ENCODE measurements at regions of chr14 and their contacts with region 1.

Region 1: DNA sequence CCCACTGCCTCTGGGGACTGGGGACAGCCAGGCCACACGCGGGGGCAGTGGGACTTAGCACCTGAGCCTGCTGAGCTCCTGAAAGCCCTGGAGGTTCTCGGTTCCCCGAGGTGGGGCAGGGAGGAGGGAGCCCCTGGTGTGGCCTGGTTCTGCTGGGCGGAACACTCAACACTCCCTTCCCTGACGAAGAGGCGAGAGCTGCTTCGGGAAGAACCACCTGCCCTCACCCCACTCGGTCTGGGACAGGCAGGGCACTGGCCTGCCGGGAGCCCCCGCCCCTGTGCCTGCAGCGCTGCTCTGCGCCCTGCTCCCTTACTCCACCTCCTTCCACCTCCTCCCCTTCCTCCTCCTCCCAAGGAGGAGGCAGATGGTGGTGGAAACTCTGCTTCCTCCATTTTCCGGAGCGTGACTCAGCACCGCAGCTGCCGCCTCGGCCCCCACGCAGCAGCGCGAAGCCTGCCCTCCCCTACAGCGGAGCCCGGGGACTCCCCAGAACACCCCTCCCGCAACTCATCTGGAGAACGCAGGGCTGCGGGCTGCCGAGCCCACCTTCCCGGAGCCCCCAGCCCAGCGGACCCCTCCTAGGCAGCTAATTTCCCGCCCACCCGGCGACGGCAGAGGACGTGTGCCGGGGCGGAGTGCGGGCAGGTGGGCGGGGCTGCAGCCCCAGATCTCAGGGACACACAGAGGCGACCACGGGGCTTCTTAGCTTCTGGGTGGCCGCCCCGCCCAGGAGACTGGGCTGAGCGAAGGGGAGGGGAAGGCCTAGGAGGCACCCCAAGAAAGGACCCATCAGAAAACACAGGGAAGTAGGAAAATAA is 11.7 kb upstream of the INF2 start:
- DNase-seq: peak; percentile 66 to 83
- H3K4me3 ChIP-seq: peak overlapping the region; percentile 68
- H3K27ac ChIP-seq: peak overlapping the region; percentile 91
- H3K4me1 ChIP-seq: peaks cover 48% of the 10 kb centered on the region
- H3K27me3 ChIP-seq: no peaks in the 10 kb centered on the region
- CTCF ChIP-seq: no peak

Region 2: GRCh38 chr14:104694991-104695659 is 17.4 kb after region 1 on chr14:
- CTCF ChIA-PET with region 1: interaction called, 4 read pairs
- POLR2A ChIA-PET with region 1: interaction called, 12 read pairs
- intact Hi-C with region 1: no loop called
- DNase-seq: peak in 1 of 2 experiments; percentile 82
- H3K4me3 ChIP-seq: no peak overlapping the region
- H3K27ac ChIP-seq: no peak overlapping the region
- H3K4me1 ChIP-seq: peaks cover 9% of the 10 kb centered on the region
- H3K27me3 ChIP-seq: no peaks in the 10 kb centered on the region
- CTCF ChIP-seq: no peak

Region 3: DNA sequence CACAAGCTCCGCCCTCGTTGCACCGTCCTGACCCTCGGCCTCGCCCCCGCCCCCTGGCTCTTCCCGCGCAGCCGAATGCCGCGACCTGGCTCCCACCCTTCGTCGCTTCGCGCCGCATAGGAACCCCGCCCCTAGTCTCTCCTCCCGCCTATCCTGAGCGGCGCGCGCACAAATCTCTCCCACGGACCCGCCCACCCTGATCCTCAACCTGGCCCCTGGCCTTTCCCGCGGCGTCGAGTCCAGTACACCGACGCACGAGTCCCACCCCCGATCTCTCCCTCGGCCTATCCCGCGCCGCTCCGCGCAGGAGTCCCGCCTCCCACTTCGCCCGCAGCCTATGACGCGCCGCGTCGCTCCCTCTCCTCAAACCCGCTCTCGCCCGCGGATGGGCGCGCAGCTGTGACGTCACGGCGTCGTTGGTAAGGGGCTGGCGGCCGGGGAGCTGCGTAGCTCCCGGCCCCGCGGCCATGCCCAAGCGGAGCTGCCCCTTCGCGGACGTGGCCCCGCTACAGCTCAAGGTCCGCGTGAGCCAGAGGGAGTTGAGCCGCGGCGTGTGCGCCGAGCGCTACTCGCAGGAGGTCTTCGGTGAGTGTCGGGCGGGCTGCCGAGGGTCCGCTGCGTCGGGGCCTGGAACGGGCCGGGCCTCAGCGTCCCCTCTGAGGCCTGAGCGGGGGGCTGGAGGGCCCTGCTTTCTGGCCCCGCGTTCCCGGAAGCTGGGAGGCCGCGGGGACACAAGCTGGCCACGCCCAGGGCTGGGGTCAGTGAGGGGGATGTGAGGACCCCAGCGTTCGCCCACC is 75.2 kb after region 1 on chr14 and contains the start of gene SIVA1:
- CTCF ChIA-PET with region 1: interaction called, 4 read pairs
- POLR2A ChIA-PET with region 1: no interaction called
- intact Hi-C with region 1: loop called (anchors 5 kb)
- DNase-seq: peak; percentile 95 to 97
- H3K4me3 ChIP-seq: peak within 1 kb of the TSS; percentile 65
- H3K27ac ChIP-seq: 0 out of 2 replicates have a peak within 1 kb of the TSS, but pooled peaks have one; percentile 7
- H3K4me1 ChIP-seq: peaks cover 28% of the 10 kb centered on the region
- H3K27me3 ChIP-seq: no peaks in the 10 kb centered on the region
- CTCF ChIP-seq: no peak
- total RNA-seq, gene SIVA1: 85.8 and 116 TPM in 2 replicates

Measured in PC-9 (cell line).